ENCODE measurements at regions of chr4 and their contacts with region 1.

Region 1: GRCh38 chr4:10461091-10461849 is 4.0 kb upstream of the ZNF518B start:
- DNase-seq: peak; percentile 91
- CTCF ChIP-seq: peak; percentile 95

Region 2: GRCh38 chr4:10346023-10346422 is 115.2 kb before region 1 on chr4:
- CTCF ChIA-PET with region 1: no interaction called
- POLR2A ChIA-PET with region 1: no interaction called
- DNase-seq: no peak
- CTCF ChIP-seq: no peak

Region 3: GRCh38 chr4:10441512-10441911 is 19.8 kb before region 1 on chr4:
- CTCF ChIA-PET with region 1: interaction called, 12 read pairs
- POLR2A ChIA-PET with region 1: no interaction called
- DNase-seq: no peak
- CTCF ChIP-seq: no peak

Region 4: GRCh38 chr4:10478621-10479020 is 17.4 kb after region 1 on chr4:
- CTCF ChIA-PET with region 1: interaction called, 36 read pairs
- POLR2A ChIA-PET with region 1: no interaction called
- DNase-seq: no peak
- CTCF ChIP-seq: no peak

Region 5: DNA sequence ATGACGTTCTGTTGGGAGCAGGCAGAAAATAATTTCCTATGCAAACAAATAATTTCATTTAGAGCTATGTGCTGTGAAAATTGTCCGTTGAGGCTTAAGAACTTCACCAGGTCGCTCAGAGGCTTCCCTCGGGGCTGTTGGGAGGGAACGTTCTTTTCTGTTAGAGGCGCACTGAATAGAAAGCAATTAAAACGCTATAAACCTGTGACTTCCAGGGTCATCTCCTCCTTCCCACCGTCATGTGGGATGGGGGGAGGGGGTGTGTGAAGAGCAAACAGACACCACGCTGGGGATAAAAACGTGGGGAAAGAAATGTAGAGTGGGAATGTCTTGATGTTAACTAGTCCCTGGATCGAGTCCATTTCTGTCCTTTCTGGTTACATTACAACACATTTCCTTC is 31.2 kb after region 1 on chr4:
- CTCF ChIA-PET with region 1: interaction called, 11 read pairs
- POLR2A ChIA-PET with region 1: no interaction called
- DNase-seq: no peak
- CTCF ChIP-seq: no peak

Region 6: GRCh38 chr4:10535912-10536311 is 74.6 kb after region 1 on chr4:
- CTCF ChIA-PET with region 1: interaction called, 15 read pairs
- POLR2A ChIA-PET with region 1: no interaction called
- DNase-seq: no peak
- CTCF ChIP-seq: no peak

Measured in GM10248 (cell line).